ENCODE measurements at regions of chr4 and their contacts with region 1.

Region 1: DNA sequence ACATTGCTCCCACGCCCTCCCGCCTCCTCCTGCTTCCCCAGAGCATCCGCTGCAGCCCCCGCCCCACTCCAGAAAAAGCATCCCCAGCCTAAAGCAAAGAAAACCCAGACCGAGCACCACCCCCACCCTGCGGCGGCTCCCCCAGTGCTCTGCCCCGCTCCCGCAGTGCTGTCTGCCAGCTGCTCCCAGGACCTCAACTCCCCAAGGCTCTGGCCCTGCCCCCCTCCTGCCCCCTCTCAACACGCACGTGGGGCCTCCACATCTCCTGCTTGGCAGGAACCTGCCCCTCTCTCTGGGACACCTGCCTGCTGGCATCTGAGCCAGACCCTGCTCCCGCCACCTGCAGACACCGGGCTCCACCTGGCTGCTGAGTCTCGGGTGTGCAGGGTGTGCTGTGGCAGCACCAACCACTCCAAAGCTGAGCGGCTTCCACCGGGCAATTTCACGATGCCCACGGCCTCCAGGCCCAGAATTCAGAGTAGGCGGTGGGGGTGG is 79.4 kb downstream of the FAM53A start:
- DNase-seq: no peak
- H3K4me3 ChIP-seq: no peak overlapping the region
- CTCF ChIP-seq: no peak
- POLR2A ChIP-seq: no peak

Region 2: DNA sequence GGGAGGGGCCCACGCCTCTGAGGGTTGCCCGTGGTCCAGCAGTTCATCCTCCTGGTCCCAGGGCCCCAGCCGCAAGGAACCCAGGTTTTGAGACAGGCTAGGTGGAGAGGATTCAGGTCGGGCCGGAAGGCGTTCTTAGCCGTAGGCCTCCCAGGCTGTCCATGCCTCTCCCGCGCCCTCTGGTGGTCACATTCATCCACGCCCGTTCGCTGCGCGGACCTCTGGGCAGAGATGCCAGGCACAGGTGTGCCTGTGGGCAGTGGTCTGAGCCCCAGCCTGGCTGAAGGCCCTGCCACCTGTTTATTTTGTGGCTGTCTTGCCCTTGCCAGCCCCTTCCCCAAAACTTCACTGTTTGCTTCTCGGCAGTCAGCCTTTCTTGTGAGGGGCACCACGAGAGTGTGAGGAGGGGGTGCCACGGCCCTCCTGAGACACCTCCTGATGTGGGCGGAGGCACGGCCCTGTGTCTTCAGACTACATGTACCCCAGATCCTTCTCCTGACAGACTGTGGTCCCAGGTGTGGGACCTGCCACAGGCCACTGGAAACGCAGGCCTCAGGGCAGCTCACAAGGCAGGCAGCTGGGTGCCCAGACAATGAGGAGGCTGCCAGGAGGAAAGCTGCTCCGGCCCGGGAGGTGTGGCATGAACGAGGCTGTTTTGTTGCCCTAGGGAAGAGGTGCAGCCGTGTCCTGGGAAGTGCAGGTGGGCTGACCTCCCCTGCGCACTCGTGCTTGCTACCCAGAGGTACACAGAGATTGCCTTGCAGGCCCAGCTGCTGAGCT is 252.7 kb before region 1 on chr4:
- intact Hi-C with region 1: loop called (anchors 10 kb)
- DNase-seq: peak; percentile 70 to 98
- H3K4me3 ChIP-seq: no peak overlapping the region
- CTCF ChIP-seq: peak in 1 of 3 donors; percentile 76
- POLR2A ChIP-seq: no peak

Region 3: GRCh38 chr4:1544861-1545281 is 59.9 kb before region 1 on chr4:
- intact Hi-C with region 1: loop called (anchors 2 kb)
- DNase-seq: no peak
- H3K4me3 ChIP-seq: no peak overlapping the region
- CTCF ChIP-seq: no peak
- POLR2A ChIP-seq: no peak

Region 4: GRCh38 chr4:1556541-1557220 is 48.1 kb before region 1 on chr4:
- intact Hi-C with region 1: no loop called
- DNase-seq: no peak
- H3K4me3 ChIP-seq: no peak overlapping the region
- CTCF ChIP-seq: no peak
- POLR2A ChIP-seq: no peak

Region 5: DNA sequence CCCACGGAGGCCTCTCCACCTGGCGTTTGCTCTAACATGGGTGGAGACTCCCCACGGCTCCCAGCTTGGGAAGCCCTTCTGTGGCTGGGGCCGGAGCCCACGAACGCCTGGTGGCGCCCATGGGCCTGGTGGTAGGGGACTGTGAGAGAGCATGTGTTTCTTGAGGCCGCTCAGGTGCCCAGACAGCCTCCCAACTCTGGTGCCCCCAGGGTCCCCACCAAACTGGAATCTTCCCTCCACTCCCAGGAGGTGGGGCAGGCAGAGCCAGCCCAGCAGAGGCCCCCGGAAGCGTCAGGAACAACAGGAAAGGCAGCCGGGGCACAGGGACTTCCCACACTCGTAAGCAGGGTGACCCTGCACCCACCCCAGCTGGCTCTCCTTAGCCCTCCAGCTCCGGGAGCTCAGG is 155.1 kb after region 1 on chr4:
- intact Hi-C with region 1: no loop called
- DNase-seq: no peak
- H3K4me3 ChIP-seq: no peak overlapping the region
- CTCF ChIP-seq: no peak
- POLR2A ChIP-seq: no peak